ENCODE measurements at regions of chr6 and their contacts with region 1.

Region 1: GRCh38 chr6:75266716-75267291 is 17.8 kb downstream of the TMEM30A start:
- DNase-seq: no peak
- ATAC-seq: peak; percentile 67 to 75
- H3K4me3 ChIP-seq: no peak overlapping the region
- H3K27ac ChIP-seq: no peak overlapping the region
- H3K4me1 ChIP-seq: peaks cover 15 to 18% of the 10 kb centered on the region in 2 donors
- H3K27me3 ChIP-seq: no peaks in the 10 kb centered on the region
- CTCF ChIP-seq: peak; percentile 62 to 93 (median 84)
- POLR2A ChIP-seq: no peak

Region 2: DNA sequence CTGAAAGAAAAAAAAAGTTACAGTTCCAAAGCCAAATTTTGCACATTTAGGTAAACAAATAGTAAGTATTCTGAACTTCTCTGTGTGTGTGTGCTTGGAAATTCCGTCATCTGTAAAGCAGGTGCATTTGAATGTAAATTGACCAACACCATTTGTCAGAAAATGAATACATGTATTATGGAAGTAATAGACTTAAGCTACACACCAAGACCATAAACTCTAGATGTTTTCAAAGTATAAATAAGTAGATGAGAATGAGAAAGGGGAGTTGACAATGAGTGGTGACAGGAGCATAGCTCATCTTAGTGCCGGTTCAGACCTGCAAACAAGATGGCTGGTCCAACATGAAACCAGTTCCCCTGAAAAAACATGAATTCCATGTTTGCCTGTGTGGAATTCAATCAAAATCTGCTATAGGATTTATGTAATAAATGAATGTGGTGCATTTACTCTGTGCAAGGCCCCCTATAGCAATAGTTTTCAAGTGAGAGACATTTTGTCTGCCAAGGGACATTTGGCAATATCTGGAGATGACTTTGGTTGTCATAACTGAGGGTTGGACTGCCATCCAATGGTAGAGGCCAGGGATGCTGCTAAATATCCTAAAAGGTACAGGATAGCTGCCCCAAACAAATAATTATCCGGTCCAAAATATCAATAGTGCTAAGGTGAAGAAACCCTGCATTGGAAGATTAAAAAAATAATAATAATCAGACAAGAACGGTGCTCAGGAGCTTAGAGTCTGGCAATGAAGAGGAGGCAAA is 237.8 kb after region 1 on chr6:
- in situ Hi-C with region 1: loop called in 1 of 4 experiments (anchors 5 kb)
- intact Hi-C with region 1: loop called (anchors 1 kb)
- DNase-seq: peak; percentile 24 to 45
- ATAC-seq: peak; percentile 93 to 99
- H3K4me3 ChIP-seq: no peak overlapping the region
- H3K27ac ChIP-seq: no peak overlapping the region
- H3K4me1 ChIP-seq: peaks cover 0 to under 1% of the 10 kb centered on the region in 2 donors
- H3K27me3 ChIP-seq: no peaks in the 10 kb centered on the region
- CTCF ChIP-seq: peak; percentile 55 to 87 (median 69)
- POLR2A ChIP-seq: no peak

Region 3: GRCh38 chr6:75516757-75517156 is 250.0 kb after region 1 on chr6:
- in situ Hi-C with region 1: loop called in 3 of 4 experiments (anchors 10 kb)
- intact Hi-C with region 1: no loop called
- DNase-seq: no peak
- ATAC-seq: no peak
- H3K4me3 ChIP-seq: no peak overlapping the region
- H3K27ac ChIP-seq: no peak overlapping the region
- H3K4me1 ChIP-seq: no peaks in the 10 kb centered on the region
- H3K27me3 ChIP-seq: no peaks in the 10 kb centered on the region
- CTCF ChIP-seq: no peak
- POLR2A ChIP-seq: no peak

Region 4: GRCh38 chr6:75526502-75527127 is 259.8 kb after region 1 on chr6:
- in situ Hi-C with region 1: loop called in 3 of 4 experiments (anchors 5 to 10 kb)
- intact Hi-C with region 1: loop called (anchors 1 kb)
- DNase-seq: peak; percentile 8 to 30
- ATAC-seq: peak; percentile 89 to 94
- H3K4me3 ChIP-seq: no peak overlapping the region
- H3K27ac ChIP-seq: no peak overlapping the region
- H3K4me1 ChIP-seq: no peaks in the 10 kb centered on the region
- H3K27me3 ChIP-seq: no peaks in the 10 kb centered on the region
- CTCF ChIP-seq: peak; percentile 72 to 84 (median 74)
- POLR2A ChIP-seq: no peak